ENCODE measurements at regions of chr13 and their contacts with region 1.

Region 1: DNA sequence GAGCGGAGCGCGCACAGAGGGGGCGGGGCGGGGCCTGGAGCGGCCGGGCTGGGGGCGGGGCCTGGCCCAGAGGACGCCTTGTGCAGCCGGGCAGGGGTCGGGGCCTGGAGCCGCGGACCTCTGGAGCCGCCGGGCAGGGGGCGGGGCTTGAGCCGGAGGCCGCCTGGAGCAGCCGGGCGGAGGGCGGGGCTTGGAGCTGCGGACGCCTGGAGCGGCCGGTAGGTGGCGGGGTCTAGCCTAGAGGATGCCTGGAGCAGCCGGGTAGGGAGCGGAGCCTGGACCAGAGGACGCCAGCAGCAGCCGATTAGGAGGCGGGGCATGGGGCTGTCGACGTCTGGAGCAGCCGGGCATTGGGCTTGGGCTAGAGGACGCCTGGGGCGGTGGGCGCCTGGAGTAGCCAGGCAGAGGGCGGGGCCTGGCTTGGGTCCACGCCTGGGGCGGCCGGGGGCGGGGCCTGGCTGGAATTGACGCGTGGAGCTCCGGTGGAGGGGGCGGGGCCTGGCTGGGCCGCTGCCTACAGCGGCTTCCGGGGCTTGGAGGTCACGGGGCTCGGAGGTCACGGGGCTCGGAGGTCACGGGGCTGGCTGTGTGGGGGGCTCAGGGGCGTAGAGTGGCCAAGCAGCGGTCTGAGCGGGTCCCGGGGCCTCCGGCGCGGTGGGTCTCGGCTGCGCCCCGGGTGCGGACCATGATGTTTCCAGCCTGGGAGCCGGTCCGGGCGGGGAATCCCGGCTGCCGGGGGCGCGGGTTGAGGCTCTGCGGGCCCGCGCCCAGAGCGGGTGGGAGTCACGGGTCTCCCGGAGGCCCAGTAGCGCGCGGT is at the start of gene ANKRD10:
- DNase-seq: peak; percentile 82 to 99 (median 89)
- ATAC-seq: peak; percentile 87
- H3K4me3 ChIP-seq: peak within 1 kb of the TSS; percentile 82
- H3K4me3 Mint-ChIP-seq: peak within 1 kb of the TSS; percentile 90 to 97 (median 92)
- H3K27ac ChIP-seq: peak within 1 kb of the TSS; percentile 89
- H3K27ac Mint-ChIP-seq: peak within 1 kb of the TSS; percentile 89 to 97 (median 91)
- H3K4me1 ChIP-seq: peaks cover 22 to 23% of the 10 kb centered on the region in 2 donors
- H3K4me1 Mint-ChIP-seq: peaks cover 25 to 57% (median 44%) of the 10 kb centered on the region in 7 donors
- H3K27me3 ChIP-seq: no peaks in the 10 kb centered on the region
- H3K27me3 Mint-ChIP-seq: no peaks in the 10 kb centered on the region
- total RNA-seq, gene ANKRD10: 129 to 155 (median 132) TPM

Region 2: GRCh38 chr13:110561344-110562035 is 353.8 kb before region 1 on chr13 and contains the start of gene RAB20:
- CTCF ChIA-PET with region 1: no interaction called
- POLR2A ChIA-PET with region 1: no interaction called
- intact Hi-C with region 1: loop called in 1 of 2 experiments (anchors 1 kb)
- DNase-seq: peak; percentile 5 to 66 (median 37)
- ATAC-seq: peak; percentile 82
- H3K4me3 ChIP-seq: peak within 1 kb of the TSS; percentile 79
- H3K4me3 Mint-ChIP-seq: peak within 1 kb of the TSS; percentile 85 to 99 (median 98)
- H3K27ac ChIP-seq: peak within 1 kb of the TSS; percentile 66
- H3K27ac Mint-ChIP-seq: peak within 1 kb of the TSS; percentile 73 to 96 (median 88)
- H3K4me1 ChIP-seq: peaks cover 4 to 9% of the 10 kb centered on the region in 2 donors
- H3K4me1 Mint-ChIP-seq: peaks cover 22 to 53% (median 41%) of the 10 kb centered on the region in 7 donors
- H3K27me3 ChIP-seq: no peaks in the 10 kb centered on the region
- H3K27me3 Mint-ChIP-seq: peaks cover 0 to 32% (median 4%) of the 10 kb centered on the region in 5 donors
- total RNA-seq, gene RAB20: 2.0 to 13.6 (median 4.0) TPM

Region 3: GRCh38 chr13:110715395-110716235 is 199.7 kb before region 1 on chr13:
- CTCF ChIA-PET with region 1: no interaction called
- POLR2A ChIA-PET with region 1: interaction called, 23 read pairs
- intact Hi-C with region 1: loop called (anchors 1 kb)
- DNase-seq: peak; percentile 87 to 99 (median 99)
- ATAC-seq: peak; percentile 71
- H3K4me3 ChIP-seq: peak overlapping the region; percentile 68
- H3K4me3 Mint-ChIP-seq: peak overlapping the region; percentile 93 to 100 (median 98)
- H3K27ac ChIP-seq: peak overlapping the region; percentile 92
- H3K27ac Mint-ChIP-seq: peak overlapping the region; percentile 96 to 100 (median 98)
- H3K4me1 ChIP-seq: peaks cover 0 to 20% of the 10 kb centered on the region in 2 donors
- H3K4me1 Mint-ChIP-seq: peaks cover 21 to 56% (median 37%) of the 10 kb centered on the region in 7 donors
- H3K27me3 ChIP-seq: no peaks in the 10 kb centered on the region
- H3K27me3 Mint-ChIP-seq: peaks cover 0 to 4% (median 0%) of the 10 kb centered on the region in 5 donors

Region 4: DNA sequence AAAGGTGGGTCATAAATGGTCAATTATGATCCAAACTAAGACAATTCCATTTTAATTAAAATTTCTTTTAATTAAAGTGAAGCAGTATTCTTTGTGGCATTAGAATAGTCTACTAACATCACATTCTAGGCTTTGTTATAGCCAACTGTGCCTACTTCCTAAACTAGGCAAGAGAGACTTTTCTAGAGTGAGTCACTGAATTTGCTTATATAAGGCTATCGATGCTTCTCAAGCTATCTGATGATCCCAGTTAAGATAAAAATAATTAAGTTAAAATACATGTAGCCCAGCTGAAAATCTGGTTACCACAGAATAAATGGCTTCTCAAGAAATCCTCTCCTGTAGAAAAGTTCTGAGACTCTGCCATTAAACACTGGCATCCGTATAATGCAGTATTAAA is 12.9 kb before region 1 on chr13:
- CTCF ChIA-PET with region 1: no interaction called
- POLR2A ChIA-PET with region 1: interaction called, 14 read pairs
- intact Hi-C with region 1: no loop called
- DNase-seq: no peak
- ATAC-seq: no peak
- H3K4me3 ChIP-seq: no peak overlapping the region
- H3K4me3 Mint-ChIP-seq: no peak overlapping the region
- H3K27ac ChIP-seq: no peak overlapping the region
- H3K27ac Mint-ChIP-seq: no peak overlapping the region
- H3K4me1 ChIP-seq: no peaks in the 10 kb centered on the region
- H3K4me1 Mint-ChIP-seq: peaks cover 12 to 29% (median 20%) of the 10 kb centered on the region in 7 donors
- H3K27me3 ChIP-seq: no peaks in the 10 kb centered on the region
- H3K27me3 Mint-ChIP-seq: no peaks in the 10 kb centered on the region

Region 5: GRCh38 chr13:111066544-111066943 is 151.3 kb after region 1 on chr13:
- CTCF ChIA-PET with region 1: no interaction called
- POLR2A ChIA-PET with region 1: interaction called, 4 read pairs
- intact Hi-C with region 1: loop called in 1 of 2 experiments (anchors 1 kb)
- DNase-seq: no peak
- ATAC-seq: no peak
- H3K4me3 ChIP-seq: no peak overlapping the region
- H3K4me3 Mint-ChIP-seq: peak overlapping the region; percentile 31 to 88 (median 75)
- H3K27ac ChIP-seq: no peak overlapping the region
- H3K27ac Mint-ChIP-seq: peak overlapping the region in 1 of 9 donors; percentile 31
- H3K4me1 ChIP-seq: no peaks in the 10 kb centered on the region
- H3K4me1 Mint-ChIP-seq: peaks cover 3 to 9% (median 9%) of the 10 kb centered on the region in 7 donors
- H3K27me3 ChIP-seq: no peaks in the 10 kb centered on the region
- H3K27me3 Mint-ChIP-seq: peaks cover 60 to 70% (median 61%) of the 10 kb centered on the region in 5 donors

Region 6: DNA sequence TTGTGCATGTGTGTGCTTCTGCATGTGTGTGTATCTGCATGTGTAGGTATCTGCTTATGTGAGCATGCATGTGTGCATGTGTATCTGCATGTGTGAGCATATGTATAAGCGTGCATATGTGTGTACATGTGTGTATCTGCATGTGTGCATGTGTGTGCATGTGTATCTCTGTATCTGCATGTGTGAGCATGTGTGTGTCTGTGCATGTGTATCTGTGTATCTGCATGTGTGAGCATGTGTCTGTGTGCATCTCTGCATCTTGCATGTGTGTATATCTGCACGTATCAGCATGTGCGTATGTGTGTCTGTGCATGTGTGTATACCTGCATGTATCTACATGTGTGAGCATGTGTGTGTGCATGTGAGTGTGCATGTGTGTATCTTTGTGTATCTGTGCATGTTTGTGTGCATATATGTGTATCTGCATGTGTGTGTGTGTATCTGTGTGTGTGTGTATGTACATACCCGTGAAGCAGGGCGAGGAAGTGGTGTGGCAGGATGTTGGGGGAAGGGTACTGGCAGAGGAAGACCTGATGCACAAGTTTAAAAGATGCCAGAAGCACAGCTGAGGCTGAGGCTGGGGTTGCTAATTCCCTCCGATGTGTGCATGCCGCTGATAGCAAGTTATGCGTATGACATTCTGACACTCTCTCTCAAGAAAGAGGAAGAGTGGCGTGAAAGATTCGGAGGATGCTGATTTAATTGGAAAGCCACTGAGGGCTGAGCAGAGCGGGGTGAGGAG is 469.3 kb after region 1 on chr13:
- CTCF ChIA-PET with region 1: no interaction called
- POLR2A ChIA-PET with region 1: no interaction called
- intact Hi-C with region 1: loop called in 1 of 2 experiments (anchors 10 kb)
- DNase-seq: peak in 6 of 9 donors; percentile 49 to 72 (median 68)
- ATAC-seq: peak; percentile 51
- H3K4me3 ChIP-seq: peak overlapping the region; percentile 34
- H3K4me3 Mint-ChIP-seq: peak overlapping the region; percentile 41 to 84 (median 71)
- H3K27ac ChIP-seq: peak overlapping the region; percentile 9
- H3K27ac Mint-ChIP-seq: peak overlapping the region in 8 of 9 donors; percentile 55 to 93 (median 80)
- H3K4me1 ChIP-seq: peaks cover 0 to 38% of the 10 kb centered on the region in 2 donors
- H3K4me1 Mint-ChIP-seq: peaks cover 27 to 59% (median 47%) of the 10 kb centered on the region in 7 donors
- H3K27me3 ChIP-seq: no peaks in the 10 kb centered on the region
- H3K27me3 Mint-ChIP-seq: no peaks in the 10 kb centered on the region